ENCODE measurements at regions of chr20 and their contacts with region 1.

Region 1: GRCh38 chr20:63537525-63538203 is 488 bp upstream of the PTK6 start:
- DNase-seq: peak; percentile 86 to 95 (median 94)
- H3K4me3 ChIP-seq: peak overlapping the region; percentile 62
- H3K4me3 Mint-ChIP-seq: peak overlapping the region; percentile 36 to 74 (median 69)
- H3K27ac ChIP-seq: peak overlapping the region; percentile 43
- H3K27ac Mint-ChIP-seq: peak overlapping the region; percentile 21 to 75 (median 62)
- H3K4me1 ChIP-seq: peaks cover 23% of the 10 kb centered on the region
- H3K4me1 Mint-ChIP-seq: peaks cover 0 to 18% (median 3%) of the 10 kb centered on the region in 3 donors
- H3K27me3 ChIP-seq: no peaks in the 10 kb centered on the region
- H3K27me3 Mint-ChIP-seq: no peaks in the 10 kb centered on the region

Region 2: GRCh38 chr20:63553227-63553932 is 15.7 kb after region 1 on chr20:
- CTCF ChIA-PET with region 1: interaction called, 35 read pairs
- POLR2A ChIA-PET with region 1: interaction called, 9 read pairs
- DNase-seq: peak; percentile 82 to 93 (median 90)
- H3K4me3 ChIP-seq: peak overlapping the region; percentile 61
- H3K4me3 Mint-ChIP-seq: peak overlapping the region; percentile 73 to 89 (median 76)
- H3K27ac ChIP-seq: peak overlapping the region; percentile 38
- H3K27ac Mint-ChIP-seq: peak overlapping the region; percentile 47 to 96 (median 92)
- H3K4me1 ChIP-seq: peaks cover 16% of the 10 kb centered on the region
- H3K4me1 Mint-ChIP-seq: peaks cover 14 to 34% (median 14%) of the 10 kb centered on the region in 3 donors
- H3K27me3 ChIP-seq: no peaks in the 10 kb centered on the region
- H3K27me3 Mint-ChIP-seq: peaks cover 9 to 13% of the 10 kb centered on the region in 2 donors

Region 3: DNA sequence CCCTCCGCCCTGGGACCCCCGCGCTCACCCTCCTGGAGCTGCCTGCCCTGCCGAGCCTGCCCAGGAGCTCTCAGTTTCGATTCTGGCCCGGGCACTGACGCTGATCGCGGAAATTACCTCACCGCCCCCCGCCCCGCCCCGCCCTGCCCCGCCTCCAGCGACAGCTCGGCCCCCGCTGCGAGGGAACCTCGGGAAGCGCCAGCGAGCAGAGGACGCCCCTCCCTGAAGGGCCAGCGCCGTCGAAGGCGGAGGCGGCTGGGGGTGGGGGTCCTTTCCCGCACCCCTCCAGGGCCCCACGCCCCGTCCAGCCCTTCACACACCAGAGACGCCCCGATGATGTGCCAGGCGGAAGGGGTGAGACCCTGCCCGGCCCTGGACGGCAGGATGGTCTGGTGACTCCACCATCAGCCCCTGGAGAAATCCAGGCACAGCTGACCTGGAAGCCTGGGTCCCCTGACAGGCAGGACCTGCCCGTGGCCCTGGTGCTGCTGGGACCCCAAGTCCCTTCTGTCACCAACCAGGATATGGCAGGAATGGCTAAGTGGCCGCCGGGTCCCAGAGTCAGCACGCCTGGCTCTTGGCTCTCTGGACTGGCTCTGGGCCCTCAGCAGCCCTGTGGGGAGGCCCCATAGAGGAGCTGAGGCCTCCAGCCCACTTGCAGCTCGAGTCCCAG is 36.6 kb after region 1 on chr20 and contains the start of gene HELZ2:
- CTCF ChIA-PET with region 1: interaction called, 27 read pairs
- POLR2A ChIA-PET with region 1: interaction called, 3 read pairs
- DNase-seq: peak; percentile 40 to 86 (median 68)
- H3K4me3 ChIP-seq: peak within 1 kb of the TSS; percentile 62
- H3K4me3 Mint-ChIP-seq: peak within 1 kb of the TSS; percentile 66 to 94 (median 78)
- H3K27ac ChIP-seq: peak within 1 kb of the TSS; percentile 70
- H3K27ac Mint-ChIP-seq: peak within 1 kb of the TSS in 7 of 8 donors; percentile 36 to 94 (median 80)
- H3K4me1 ChIP-seq: peaks cover 20% of the 10 kb centered on the region
- H3K4me1 Mint-ChIP-seq: peaks cover 3 to 7% (median 4%) of the 10 kb centered on the region in 3 donors
- H3K27me3 ChIP-seq: no peaks in the 10 kb centered on the region
- H3K27me3 Mint-ChIP-seq: peaks cover 0 to 4% of the 10 kb centered on the region in 2 donors
- total RNA-seq, gene HELZ2: 7.4 to 8.7 TPM

Region 4: DNA sequence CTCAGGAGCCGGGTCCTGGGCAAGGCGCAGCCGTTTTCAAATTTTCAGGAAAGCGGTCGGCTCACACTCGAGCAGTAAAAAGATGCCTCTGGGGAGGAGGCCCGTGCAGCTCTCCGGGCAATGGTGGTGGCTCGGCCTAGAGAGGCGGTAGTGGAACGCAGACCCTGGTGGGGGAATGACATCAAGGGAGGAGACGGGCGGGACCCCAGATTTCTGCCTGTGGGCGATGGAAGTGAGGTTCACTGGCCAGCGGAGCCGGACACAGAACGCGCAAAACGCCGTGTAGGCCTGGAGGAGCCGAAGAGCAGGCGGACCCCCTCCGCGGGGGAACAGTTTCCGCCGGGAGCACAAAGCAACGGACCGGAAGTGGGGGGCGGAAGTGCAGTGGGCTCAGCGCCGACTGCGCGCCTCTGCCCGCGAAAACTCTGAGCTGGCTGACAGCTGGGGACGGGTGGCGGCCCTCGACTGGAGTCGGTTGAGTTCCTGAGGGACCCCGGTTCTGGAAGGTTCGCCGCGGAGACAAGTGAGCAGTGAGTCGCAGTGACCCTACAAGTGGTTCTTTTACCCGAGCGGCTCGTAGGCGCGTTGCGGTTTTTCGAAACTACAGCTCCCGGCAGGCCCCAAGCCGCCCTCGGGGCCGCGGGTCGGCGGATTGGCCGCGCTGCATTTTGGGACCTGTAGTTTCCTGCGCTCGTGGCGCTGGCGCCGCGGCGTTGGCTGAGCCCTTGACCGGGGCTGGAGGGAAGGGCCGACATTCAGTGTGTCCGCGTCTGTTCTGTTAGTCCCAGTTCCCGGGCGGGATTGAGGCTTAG is 120.5 kb after region 1 on chr20 and contains the start of gene RTEL1:
- CTCF ChIA-PET with region 1: interaction called, 12 read pairs
- POLR2A ChIA-PET with region 1: no interaction called
- DNase-seq: peak; percentile 78 to 89 (median 84)
- H3K4me3 ChIP-seq: peak within 1 kb of the TSS; percentile 96
- H3K4me3 Mint-ChIP-seq: peak within 1 kb of the TSS; percentile 94 to 96 (median 95)
- H3K27ac ChIP-seq: peak within 1 kb of the TSS; percentile 66
- H3K27ac Mint-ChIP-seq: peak within 1 kb of the TSS; percentile 92 to 98 (median 95)
- H3K4me1 ChIP-seq: peaks cover 39% of the 10 kb centered on the region
- H3K4me1 Mint-ChIP-seq: peaks cover 26 to 48% (median 41%) of the 10 kb centered on the region in 3 donors
- H3K27me3 ChIP-seq: no peaks in the 10 kb centered on the region
- H3K27me3 Mint-ChIP-seq: peaks cover 0 to 9% of the 10 kb centered on the region in 2 donors
- total RNA-seq, gene RTEL1: 52.3 to 54.5 TPM

Region 5: DNA sequence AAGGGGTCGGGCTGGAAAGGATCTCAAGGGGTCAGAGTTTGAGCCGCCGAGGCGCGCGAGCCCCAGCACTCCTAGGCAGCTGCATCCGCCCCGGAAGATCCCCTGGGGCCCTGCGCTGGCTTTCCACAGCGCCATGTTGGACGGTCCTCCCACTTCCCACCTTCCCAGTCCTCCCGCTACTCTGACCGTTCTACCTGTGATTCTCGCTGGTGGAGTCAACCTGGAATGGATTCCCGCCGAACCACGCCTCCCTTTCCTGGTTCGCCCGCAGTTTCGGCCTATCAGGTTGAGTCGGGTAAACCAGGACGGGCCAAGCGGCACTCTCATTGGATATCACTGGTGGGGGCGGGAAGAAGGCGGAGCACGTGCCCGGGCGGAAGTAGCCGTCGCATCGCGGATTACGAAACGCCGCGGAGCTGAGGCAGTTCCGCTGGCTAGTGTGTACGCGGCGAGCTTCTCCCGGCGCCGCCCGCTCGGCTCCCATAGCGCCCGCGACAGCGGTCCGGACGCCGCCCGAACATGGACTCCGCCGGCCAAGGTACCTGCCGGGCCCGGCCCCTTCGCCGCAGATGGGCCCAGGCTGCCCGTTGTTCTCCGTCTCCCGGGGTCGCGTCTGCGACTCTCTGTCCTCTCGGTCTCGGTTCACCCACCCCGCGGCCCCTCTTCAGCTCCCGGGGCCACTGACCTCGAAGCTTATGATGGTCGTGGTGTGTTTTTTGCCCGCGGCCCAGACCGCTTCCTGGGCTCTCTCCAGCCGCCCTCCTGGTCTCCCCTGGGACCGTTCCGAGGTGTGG is 327.4 kb after region 1 on chr20 and contains the start of gene TPD52L2:
- CTCF ChIA-PET with region 1: interaction called, 14 read pairs
- POLR2A ChIA-PET with region 1: interaction called, 5 read pairs
- DNase-seq: peak; percentile 96 to 98 (median 96)
- H3K4me3 ChIP-seq: peak within 1 kb of the TSS; percentile 79
- H3K4me3 Mint-ChIP-seq: peak within 1 kb of the TSS; percentile 92 to 99 (median 95)
- H3K27ac ChIP-seq: peak within 1 kb of the TSS; percentile 80
- H3K27ac Mint-ChIP-seq: peak within 1 kb of the TSS; percentile 90 to 99 (median 96)
- H3K4me1 ChIP-seq: peaks cover 21% of the 10 kb centered on the region
- H3K4me1 Mint-ChIP-seq: peaks cover 19 to 38% (median 32%) of the 10 kb centered on the region in 3 donors
- H3K27me3 ChIP-seq: no peaks in the 10 kb centered on the region
- H3K27me3 Mint-ChIP-seq: no peaks in the 10 kb centered on the region
- total RNA-seq, gene TPD52L2: 60.0 to 64.4 TPM